AG04450 (cell line): ENCODE measurements at regions of chr5 and their contacts with region 1.

Region 1: DNA sequence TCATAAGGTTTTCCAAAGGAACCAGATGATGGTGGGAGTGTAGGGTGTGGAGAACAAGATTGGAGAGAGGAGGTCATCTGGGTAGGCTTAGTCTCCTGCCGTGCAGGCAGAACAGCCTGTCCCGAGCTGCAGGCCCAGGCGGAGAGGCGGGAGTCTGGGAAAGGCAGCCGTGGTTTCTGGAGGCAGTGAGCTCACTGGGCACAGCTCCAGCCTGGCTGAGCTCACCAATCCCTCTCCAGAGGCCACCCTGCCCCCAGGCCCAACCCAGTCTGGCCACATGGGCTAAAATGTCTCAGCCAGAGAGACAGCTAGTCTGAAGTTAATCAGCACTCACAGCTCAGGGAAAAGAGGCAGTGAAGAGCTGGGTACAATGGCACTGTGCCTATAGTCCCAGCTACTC is 12.3 kb downstream of the P4HA2 start:
- DNase-seq: peak; percentile 88
- H3K4me3 ChIP-seq: no peak overlapping the region
- H3K27ac ChIP-seq: peak overlapping the region; percentile 57
- H3K27me3 ChIP-seq: no peaks in the 10 kb centered on the region
- CTCF ChIP-seq: no peak

Region 2: DNA sequence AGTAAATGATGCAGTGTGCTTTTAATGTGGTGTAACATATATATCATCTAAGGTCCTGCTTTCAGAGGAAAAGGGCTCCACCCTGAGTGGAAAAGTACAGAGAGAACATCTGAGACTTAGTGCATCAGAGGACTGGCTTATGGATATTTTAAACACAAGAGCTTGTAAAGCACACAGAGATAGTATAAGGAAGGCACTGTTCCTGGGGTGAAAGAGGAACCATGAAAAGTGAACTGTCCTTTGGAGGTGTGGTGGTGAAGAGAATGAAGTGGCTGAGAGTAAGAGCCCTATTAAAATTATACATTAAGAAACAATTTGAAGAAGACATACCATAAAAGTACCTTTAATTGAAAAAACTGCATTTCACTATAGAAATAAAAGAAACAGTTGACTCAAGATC is 72.9 kb before region 1 on chr5:
- CTCF ChIA-PET with region 1: no interaction called
- POLR2A ChIA-PET with region 1: no interaction called
- DNase-seq: no peak
- H3K4me3 ChIP-seq: no peak overlapping the region
- H3K27ac ChIP-seq: no peak overlapping the region
- H3K27me3 ChIP-seq: peaks cover under 1% of the 10 kb centered on the region
- CTCF ChIP-seq: no peak

Region 3: GRCh38 chr5:132227485-132228240 is 12.3 kb after region 1 on chr5 and contains the start of gene P4HA2:
- CTCF ChIA-PET with region 1: interaction called, 12 read pairs
- POLR2A ChIA-PET with region 1: interaction called, 7 read pairs
- DNase-seq: no peak
- H3K4me3 ChIP-seq: peak within 1 kb of the TSS; percentile 72
- H3K27ac ChIP-seq: peak within 1 kb of the TSS; percentile 2
- H3K27me3 ChIP-seq: peaks cover 3% of the 10 kb centered on the region
- CTCF ChIP-seq: no peak
- polyA plus RNA-seq, gene P4HA2: 178 and 186 TPM in 2 replicates